Heart right ventricle (tissue), 16 donors: ENCODE measurements at regions of chr16 and their contacts with region 1.

Region 1: GRCh38 chr16:5071681-5072333 is at the start of gene ALG1:
- DNase-seq: peak; percentile 90 to 92
- ATAC-seq: peak; percentile 94 to 97 (median 96)
- H3K4me3 ChIP-seq: peak within 1 kb of the TSS; percentile 57 to 86 (median 76)
- H3K27ac ChIP-seq: peak within 1 kb of the TSS; percentile 6 to 93 (median 78)
- H3K4me1 ChIP-seq: peaks cover 0 to 20% (median 12%) of the 10 kb centered on the region in 9 donors
- H3K27me3 ChIP-seq: no peaks in the 10 kb centered on the region
- CTCF ChIP-seq: no peak
- total RNA-seq, gene ALG1: 4.9 to 13.7 (median 7.9) TPM

Region 2: DNA sequence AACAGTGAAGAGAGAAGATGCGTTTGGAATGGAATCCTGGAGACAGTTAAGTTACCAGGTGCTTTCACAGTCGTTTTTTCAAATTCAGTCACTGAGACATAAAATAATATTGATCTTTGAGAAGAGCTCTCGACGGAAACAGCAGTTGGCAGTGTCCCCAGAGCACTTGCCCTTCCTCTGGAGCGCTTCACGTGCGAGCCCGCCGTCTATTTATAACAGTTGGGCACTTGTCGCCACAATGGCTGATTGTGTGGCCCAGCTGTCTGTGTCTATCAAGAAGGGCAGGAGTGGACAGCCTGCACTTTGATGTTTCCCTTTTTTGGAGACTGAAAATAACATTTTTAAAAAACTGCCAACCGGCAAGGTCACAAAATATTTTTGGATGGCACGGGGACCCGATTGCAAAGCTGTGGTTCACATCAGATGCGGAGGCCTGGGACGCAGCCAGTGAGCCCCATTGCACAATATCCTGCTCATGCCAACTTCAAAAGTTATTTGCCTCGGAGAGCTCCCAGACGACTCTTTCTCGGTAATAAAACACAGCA is 1018.4 kb before region 1 on chr16:
- intact Hi-C with region 1: no loop called
- DNase-seq: peak; percentile 70 to 78
- ATAC-seq: peak; percentile 78 to 95 (median 90)
- H3K4me3 ChIP-seq: peak overlapping the region in 8 of 10 donors; percentile 2 to 39 (median 26)
- H3K27ac ChIP-seq: peak overlapping the region; percentile 42 to 86 (median 77)
- H3K4me1 ChIP-seq: peaks cover 3 to 38% (median 27%) of the 10 kb centered on the region in 9 donors
- H3K27me3 ChIP-seq: no peaks in the 10 kb centered on the region
- CTCF ChIP-seq: no peak

Region 3: GRCh38 chr16:5033256-5034169 is 38.3 kb before region 1 on chr16 and contains the start of gene NAGPA:
- intact Hi-C with region 1: loop called in 1 of 10 experiments (anchors 5 kb)
- DNase-seq: peak; percentile 91
- ATAC-seq: peak; percentile 86 to 97 (median 95)
- H3K4me3 ChIP-seq: peak within 1 kb of the TSS; percentile 69 to 99 (median 82)
- H3K27ac ChIP-seq: peak within 1 kb of the TSS in 8 of 10 donors; percentile 21 to 87 (median 45)
- H3K4me1 ChIP-seq: peaks cover 0 to 28% (median 22%) of the 10 kb centered on the region in 9 donors
- H3K27me3 ChIP-seq: no peaks in the 10 kb centered on the region
- CTCF ChIP-seq: no peak
- total RNA-seq, gene NAGPA: 4.7 to 11.0 (median 6.1) TPM

Region 4: DNA sequence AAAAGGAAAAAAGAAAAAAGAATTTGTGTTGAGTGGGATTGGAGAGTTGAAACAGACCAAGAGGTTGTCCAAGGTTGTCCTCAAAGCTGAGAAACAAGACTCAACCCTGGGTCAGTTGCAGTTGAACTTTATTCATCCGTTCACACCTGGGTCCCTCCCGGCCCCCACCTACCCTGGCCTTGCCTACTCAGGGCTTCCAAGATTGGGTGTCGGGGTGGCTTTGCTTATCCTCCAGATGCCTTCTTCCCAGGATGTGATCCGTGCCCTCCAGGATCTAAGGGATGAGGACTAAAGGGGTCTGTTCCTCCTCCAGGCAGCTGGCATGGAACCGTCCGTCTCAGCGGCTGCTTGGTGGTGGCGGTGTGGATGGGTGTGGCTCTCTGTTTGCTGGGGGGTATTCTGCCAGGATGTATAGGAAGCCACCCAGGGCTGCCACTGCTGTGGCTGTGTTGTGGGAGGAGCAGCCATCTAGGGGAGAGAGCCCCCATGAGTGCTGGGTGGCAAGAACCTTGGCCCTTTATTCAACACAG is 27.7 kb before region 1 on chr16:
- intact Hi-C with region 1: no loop called
- DNase-seq: no peak
- ATAC-seq: no peak
- H3K4me3 ChIP-seq: no peak overlapping the region
- H3K27ac ChIP-seq: no peak overlapping the region
- H3K4me1 ChIP-seq: peaks cover 0 to 3% (median 0%) of the 10 kb centered on the region in 9 donors
- H3K27me3 ChIP-seq: no peaks in the 10 kb centered on the region
- CTCF ChIP-seq: no peak